Activated CD4-positive, alpha-beta memory T cell treated with anti-CD3 and anti-CD28 coated beads for 36 hours (primary cell): ENCODE measurements at regions of chr6 and their contacts with region 1.

Region 1: GRCh38 chr6:52162940-52163908 is 23.0 kb upstream of the IL17A start:
- DNase-seq: no peak
- H3K4me3 Mint-ChIP-seq: no peak overlapping the region
- H3K27ac Mint-ChIP-seq: peak overlapping the region; percentile 60
- H3K4me1 Mint-ChIP-seq: peaks cover 44% of the 10 kb centered on the region
- H3K27me3 Mint-ChIP-seq: peaks cover 30% of the 10 kb centered on the region

Region 2: GRCh38 chr6:52063584-52064344 is 99.5 kb before region 1 on chr6:
- CTCF ChIA-PET with region 1: interaction called, 8 read pairs
- POLR2A ChIA-PET with region 1: no interaction called
- intact Hi-C with region 1: loop called (anchors 1 kb)
- DNase-seq: peak; percentile 76
- H3K4me3 Mint-ChIP-seq: no peak overlapping the region
- H3K27ac Mint-ChIP-seq: peak overlapping the region; percentile 38
- H3K4me1 Mint-ChIP-seq: peaks cover 10% of the 10 kb centered on the region
- H3K27me3 Mint-ChIP-seq: no peaks in the 10 kb centered on the region

Region 3: DNA sequence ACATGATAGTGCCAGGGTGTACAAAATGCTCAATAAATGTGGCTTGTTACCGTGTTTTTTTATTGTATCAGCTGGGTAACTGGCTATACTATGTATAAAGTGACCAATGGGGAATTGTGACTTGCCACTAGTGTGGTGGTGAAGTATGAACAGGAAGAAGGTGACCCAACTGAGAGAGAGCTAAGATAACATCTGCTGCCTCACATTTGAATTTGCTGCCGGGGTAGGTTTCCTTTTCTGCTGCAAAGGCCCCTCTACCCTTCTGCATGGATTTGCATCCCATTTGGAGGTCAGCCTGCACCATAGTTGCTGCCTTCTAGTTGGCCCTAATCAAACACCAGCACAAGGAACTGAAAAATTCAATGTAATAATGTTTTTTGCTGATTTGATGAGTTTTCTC is 47.0 kb after region 1 on chr6:
- CTCF ChIA-PET with region 1: interaction called, 7 read pairs
- POLR2A ChIA-PET with region 1: no interaction called
- intact Hi-C with region 1: loop called (anchors 1 kb)
- DNase-seq: no peak
- H3K4me3 Mint-ChIP-seq: no peak overlapping the region
- H3K27ac Mint-ChIP-seq: no peak overlapping the region
- H3K4me1 Mint-ChIP-seq: peaks cover 16% of the 10 kb centered on the region
- H3K27me3 Mint-ChIP-seq: peaks cover 27% of the 10 kb centered on the region

Region 4: DNA sequence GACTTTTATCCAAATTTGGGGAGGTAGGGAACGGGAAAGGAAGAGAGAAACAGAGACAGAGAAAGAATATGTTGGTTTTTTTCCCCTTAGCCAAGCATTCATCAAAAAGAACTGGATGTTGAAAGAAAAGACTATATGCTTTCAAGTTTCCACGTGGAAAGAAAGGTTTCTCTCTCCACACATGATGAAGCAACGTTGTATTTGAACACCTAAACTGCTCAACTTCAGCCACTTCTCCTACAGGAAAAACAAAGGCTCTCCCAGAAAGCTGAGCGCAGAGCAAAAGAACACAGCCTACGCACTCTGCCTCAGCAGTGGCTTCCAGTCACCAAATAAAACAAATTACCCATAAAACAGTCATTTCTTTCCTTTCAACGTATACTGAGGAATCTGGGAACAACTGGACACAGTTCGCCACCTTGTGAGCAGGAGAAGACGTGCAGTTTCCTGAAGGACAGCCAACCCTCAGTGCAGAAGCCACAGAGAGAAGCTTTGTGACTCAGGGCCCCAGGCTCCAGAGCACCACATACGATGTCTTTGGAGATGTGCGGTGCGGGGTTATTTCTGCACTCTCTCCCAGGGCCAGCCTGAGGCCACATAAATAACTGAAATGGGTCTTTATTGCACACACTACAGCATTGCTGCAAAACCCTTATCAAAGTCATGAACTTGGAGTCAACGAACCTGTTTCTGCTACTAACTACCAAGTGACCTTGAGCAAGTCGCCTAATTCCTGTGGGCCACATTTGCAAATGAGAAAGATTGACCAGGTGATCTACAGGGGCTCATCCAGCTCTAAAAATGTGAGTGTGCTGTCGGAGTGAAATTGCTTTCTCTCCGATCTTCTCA is 71.0 kb after region 1 on chr6:
- CTCF ChIA-PET with region 1: interaction called, 52 read pairs
- POLR2A ChIA-PET with region 1: interaction called, 4 read pairs
- intact Hi-C with region 1: loop called (anchors 1 kb)
- DNase-seq: peak; percentile 73
- H3K4me3 Mint-ChIP-seq: no peak overlapping the region
- H3K27ac Mint-ChIP-seq: no peak overlapping the region
- H3K4me1 Mint-ChIP-seq: peaks cover 13% of the 10 kb centered on the region
- H3K27me3 Mint-ChIP-seq: peaks cover 39% of the 10 kb centered on the region

Region 5: GRCh38 chr6:52263709-52264540 is 100.7 kb after region 1 on chr6:
- CTCF ChIA-PET with region 1: interaction called, 120 read pairs
- POLR2A ChIA-PET with region 1: interaction called, 3 read pairs
- intact Hi-C with region 1: loop called (anchors 1 kb)
- DNase-seq: peak; percentile 82
- H3K4me3 Mint-ChIP-seq: no peak overlapping the region
- H3K27ac Mint-ChIP-seq: peak overlapping the region; percentile 49
- H3K4me1 Mint-ChIP-seq: no peaks in the 10 kb centered on the region
- H3K27me3 Mint-ChIP-seq: no peaks in the 10 kb centered on the region

Region 6: DNA sequence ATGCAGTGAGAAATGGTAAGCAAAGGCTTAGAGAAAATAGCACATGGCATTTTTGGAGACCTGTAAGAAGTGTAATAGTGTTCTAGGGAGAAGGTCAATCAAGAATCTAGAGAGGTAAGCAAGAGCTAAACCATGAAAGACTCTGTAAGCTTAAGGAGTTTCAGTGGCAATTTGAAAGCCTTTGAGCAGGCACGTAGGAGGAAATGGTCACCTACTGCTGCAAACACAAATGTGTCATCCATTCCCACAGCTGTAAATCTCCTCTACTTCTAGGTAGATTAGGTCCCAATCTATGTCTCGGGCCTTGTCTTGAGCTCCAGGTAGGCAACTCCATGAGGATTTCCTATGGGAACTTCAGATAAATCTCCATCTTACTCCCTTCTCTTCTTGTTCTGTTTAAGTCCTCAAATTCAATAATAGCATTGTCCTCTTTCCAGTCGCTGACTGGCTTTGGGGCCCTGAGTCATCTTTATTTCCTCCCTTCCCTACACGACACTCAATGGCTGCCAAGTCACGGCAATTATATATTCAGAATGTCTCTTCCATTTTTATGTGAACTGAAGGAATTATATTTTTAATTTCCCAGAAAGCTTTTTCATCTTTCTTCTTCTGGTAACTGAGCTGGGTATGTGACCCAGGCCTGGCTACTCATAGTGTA is 174.5 kb after region 1 on chr6:
- CTCF ChIA-PET with region 1: no interaction called
- POLR2A ChIA-PET with region 1: no interaction called
- intact Hi-C with region 1: no loop called
- DNase-seq: no peak
- H3K4me3 Mint-ChIP-seq: no peak overlapping the region
- H3K27ac Mint-ChIP-seq: peak overlapping the region; percentile 19
- H3K4me1 Mint-ChIP-seq: peaks cover 56% of the 10 kb centered on the region
- H3K27me3 Mint-ChIP-seq: no peaks in the 10 kb centered on the region

Region 7: DNA sequence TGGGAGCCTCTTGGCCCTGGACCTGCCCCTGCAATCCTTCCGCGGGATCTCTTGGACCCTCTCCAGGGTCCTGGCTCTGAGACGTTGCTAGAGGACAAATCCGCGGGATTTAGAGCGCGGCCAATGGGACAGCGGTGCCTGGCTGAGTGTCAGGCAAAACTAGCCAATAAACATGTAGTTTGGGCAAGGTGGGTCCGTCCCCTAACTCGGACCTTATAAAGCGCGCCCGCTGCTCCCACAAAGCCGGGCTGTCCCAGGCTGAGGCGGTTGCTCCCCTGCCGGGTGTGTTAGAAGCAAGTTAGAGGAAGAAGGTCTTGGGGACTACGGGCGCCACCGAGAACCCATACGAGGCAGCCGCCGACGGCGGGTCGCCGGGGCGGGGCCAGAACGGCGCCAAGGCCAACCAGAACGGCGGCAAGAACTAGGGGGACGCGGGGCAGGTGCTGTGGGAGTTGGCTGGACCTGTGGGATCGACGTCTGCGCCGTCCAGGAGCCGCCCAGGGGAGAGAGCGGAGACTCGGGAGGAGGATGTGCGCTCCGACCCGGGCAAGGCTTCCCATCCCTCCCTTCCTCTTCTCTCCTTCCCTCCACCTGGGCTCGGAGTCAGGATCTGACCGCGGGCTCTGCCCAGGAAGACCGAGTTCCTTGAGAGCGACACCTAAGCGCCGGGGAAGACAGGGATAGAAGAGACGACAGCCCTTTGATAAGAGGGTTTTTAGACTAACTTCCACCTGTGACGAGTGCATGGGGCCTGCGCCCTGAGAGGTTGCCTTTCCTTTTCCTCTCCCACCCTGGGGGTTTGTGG is 501.2 kb after region 1 on chr6:
- CTCF ChIA-PET with region 1: interaction called, 3 read pairs
- POLR2A ChIA-PET with region 1: no interaction called
- intact Hi-C with region 1: loop called (anchors 1 kb)
- DNase-seq: peak; percentile 84
- H3K4me3 Mint-ChIP-seq: no peak overlapping the region
- H3K27ac Mint-ChIP-seq: no peak overlapping the region
- H3K4me1 Mint-ChIP-seq: peaks cover 8% of the 10 kb centered on the region
- H3K27me3 Mint-ChIP-seq: no peaks in the 10 kb centered on the region